ENCODE measurements at regions of chr3 and their contacts with region 1.

Region 1: DNA sequence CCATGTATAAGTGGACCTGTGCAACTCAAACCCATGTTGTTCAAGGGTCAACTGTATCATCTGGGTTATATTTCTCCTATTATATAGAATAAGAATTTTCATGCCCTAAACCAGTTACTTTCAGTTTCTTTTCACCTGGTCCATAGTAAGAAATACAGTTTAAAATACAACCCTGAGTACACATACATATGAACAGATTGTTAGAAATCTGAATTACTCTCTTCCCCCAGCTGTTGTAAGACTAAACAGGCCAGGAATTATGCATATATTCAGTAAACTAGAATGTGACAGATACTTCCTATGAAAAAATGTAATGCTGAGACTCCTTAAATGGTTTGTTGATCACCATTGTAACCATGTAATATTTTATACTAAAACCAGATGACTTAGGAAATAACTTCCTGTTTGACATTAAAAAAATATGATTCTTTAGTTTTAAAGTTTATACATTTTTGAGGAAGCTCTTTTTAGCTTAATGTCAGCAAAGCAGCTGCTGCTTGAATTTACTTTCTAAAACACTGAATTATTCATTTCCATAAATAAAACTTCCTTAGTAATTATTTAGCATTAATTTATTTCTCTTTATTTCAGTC is 52.5 kb upstream of the ZCWPW2 start:
- DNase-seq: peak in 1 of 9 experiments; percentile 28
- ATAC-seq: no peak
- H3K4me3 ChIP-seq: peak overlapping the region in 1 of 2 experiments; percentile 49
- H3K4me3 Mint-ChIP-seq: peak overlapping the region; percentile 50
- H3K27ac ChIP-seq: peak overlapping the region in 1 of 2 experiments; percentile 75
- H3K27ac Mint-ChIP-seq: peak overlapping the region; percentile 33
- H3K4me1 ChIP-seq: peaks cover 9% of the 10 kb centered on the region
- H3K4me1 Mint-ChIP-seq: peaks cover 36% of the 10 kb centered on the region
- H3K27me3 ChIP-seq: no peaks in the 10 kb centered on the region
- H3K27me3 Mint-ChIP-seq: no peaks in the 10 kb centered on the region
- CTCF ChIP-seq: no peak

Region 2: GRCh38 chr3:28279770-28280169 is 16.2 kb before region 1 on chr3:
- CTCF ChIA-PET with region 1: interaction called, 3 read pairs
- POLR2A ChIA-PET with region 1: no interaction called
- intact Hi-C with region 1: loop called in 1 of 2 experiments (anchors 2 kb)
- DNase-seq: no peak
- ATAC-seq: no peak
- H3K4me3 ChIP-seq: no peak overlapping the region
- H3K4me3 Mint-ChIP-seq: no peak overlapping the region
- H3K27ac ChIP-seq: no peak overlapping the region
- H3K27ac Mint-ChIP-seq: no peak overlapping the region
- H3K4me1 ChIP-seq: no peaks in the 10 kb centered on the region
- H3K4me1 Mint-ChIP-seq: peaks cover 23% of the 10 kb centered on the region
- H3K27me3 ChIP-seq: no peaks in the 10 kb centered on the region
- H3K27me3 Mint-ChIP-seq: no peaks in the 10 kb centered on the region
- CTCF ChIP-seq: no peak

Region 3: DNA sequence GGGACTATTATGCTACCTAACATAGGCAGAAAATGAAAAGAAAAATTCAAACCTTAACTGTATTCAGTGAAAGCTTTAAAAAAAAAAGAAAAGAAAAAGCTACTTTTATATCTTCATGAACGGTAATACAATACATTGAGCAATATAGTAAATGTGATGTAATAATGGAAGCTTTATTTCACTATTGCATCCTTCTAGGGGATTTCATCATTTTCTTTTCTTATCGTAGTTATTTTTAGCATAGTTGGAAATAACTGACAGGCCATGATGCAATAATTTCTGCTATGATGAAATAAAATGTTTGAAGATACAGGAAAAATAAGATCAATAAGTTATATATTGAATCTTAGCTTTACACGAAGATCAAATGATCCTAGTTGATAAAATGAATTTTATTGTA is 12.2 kb after region 1 on chr3:
- CTCF ChIA-PET with region 1: interaction called, 3 read pairs
- POLR2A ChIA-PET with region 1: no interaction called
- intact Hi-C with region 1: loop called in 1 of 2 experiments (anchors 2 kb)
- DNase-seq: no peak
- ATAC-seq: no peak
- H3K4me3 ChIP-seq: no peak overlapping the region
- H3K4me3 Mint-ChIP-seq: no peak overlapping the region
- H3K27ac ChIP-seq: no peak overlapping the region
- H3K27ac Mint-ChIP-seq: no peak overlapping the region
- H3K4me1 ChIP-seq: no peaks in the 10 kb centered on the region
- H3K4me1 Mint-ChIP-seq: peaks cover 18% of the 10 kb centered on the region
- H3K27me3 ChIP-seq: no peaks in the 10 kb centered on the region
- H3K27me3 Mint-ChIP-seq: no peaks in the 10 kb centered on the region
- CTCF ChIP-seq: no peak